ENCODE measurements at regions of chr13 and their contacts with region 1.

Region 1: GRCh38 chr13:113296842-113297369 is at the start of gene LAMP1:
- DNase-seq: peak; percentile 98
- H3K4me3 Mint-ChIP-seq: peak within 1 kb of the TSS; percentile 97
- H3K27ac Mint-ChIP-seq: peak within 1 kb of the TSS; percentile 97
- H3K4me1 Mint-ChIP-seq: peaks cover 29% of the 10 kb centered on the region
- H3K27me3 Mint-ChIP-seq: peaks cover 16% of the 10 kb centered on the region
- total RNA-seq, gene LAMP1: 57.7 and 58.4 TPM in 2 replicates

Region 2: GRCh38 chr13:112942689-112943308 is 354.1 kb before region 1 on chr13:
- intact Hi-C with region 1: loop called (anchors 1 kb)
- DNase-seq: peak; percentile 86
- H3K4me3 Mint-ChIP-seq: peak overlapping the region; percentile 86
- H3K27ac Mint-ChIP-seq: no peak overlapping the region
- H3K4me1 Mint-ChIP-seq: peaks cover 5% of the 10 kb centered on the region
- H3K27me3 Mint-ChIP-seq: peaks cover 35% of the 10 kb centered on the region

Region 3: GRCh38 chr13:113138792-113139551 is 157.9 kb before region 1 on chr13:
- intact Hi-C with region 1: no loop called
- DNase-seq: no peak
- H3K4me3 Mint-ChIP-seq: no peak overlapping the region
- H3K27ac Mint-ChIP-seq: no peak overlapping the region
- H3K4me1 Mint-ChIP-seq: no peaks in the 10 kb centered on the region
- H3K27me3 Mint-ChIP-seq: peaks cover 17% of the 10 kb centered on the region

Region 4: GRCh38 chr13:113208424-113209335 is 88.2 kb before region 1 on chr13 and contains the start of gene PCID2:
- intact Hi-C with region 1: loop called (anchors 2 kb)
- DNase-seq: peak; percentile 87
- H3K4me3 Mint-ChIP-seq: peak within 1 kb of the TSS; percentile 82
- H3K27ac Mint-ChIP-seq: peak within 1 kb of the TSS; percentile 53
- H3K4me1 Mint-ChIP-seq: peaks cover 45% of the 10 kb centered on the region
- H3K27me3 Mint-ChIP-seq: no peaks in the 10 kb centered on the region
- total RNA-seq, gene PCID2: 67.1 and 67.6 TPM in 2 replicates

Region 5: DNA sequence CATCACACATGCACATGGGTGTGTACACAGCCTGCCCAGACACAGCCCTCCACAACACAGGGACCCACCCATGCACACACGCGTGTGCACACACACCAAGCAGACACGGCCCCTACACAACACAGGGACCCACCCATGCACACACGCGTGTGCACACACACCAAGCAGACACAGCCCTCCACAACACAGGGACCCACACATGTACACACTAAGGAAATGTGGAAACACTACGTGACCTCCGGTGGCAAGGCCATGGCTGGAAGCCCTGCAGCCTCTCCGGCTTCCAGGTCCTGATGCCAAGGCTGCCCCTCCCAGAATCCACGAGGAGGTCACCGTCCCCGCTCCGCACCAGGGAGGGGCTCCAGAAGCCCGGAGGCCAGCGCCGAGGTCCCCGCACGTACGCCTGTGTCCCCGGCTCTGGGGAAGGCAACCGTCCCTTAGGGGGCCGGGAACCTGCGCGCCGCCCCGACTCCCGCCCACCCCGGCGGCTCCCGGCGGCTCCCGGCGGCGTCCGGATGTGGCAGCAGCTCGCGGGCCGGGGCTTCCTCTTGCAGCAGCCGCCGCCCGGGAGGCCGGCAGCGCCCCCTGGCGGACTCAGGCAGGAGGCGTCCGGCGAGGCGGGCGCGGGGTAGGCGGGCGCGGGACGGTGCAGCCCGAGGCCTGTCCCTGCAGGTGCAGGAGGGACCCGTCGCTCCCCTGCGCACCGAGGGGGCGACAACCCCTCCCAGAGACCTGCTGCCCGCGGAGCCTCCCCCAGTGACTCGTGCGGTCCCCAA is 96.8 kb after region 1 on chr13:
- intact Hi-C with region 1: loop called (anchors 2 kb)
- DNase-seq: peak; percentile 77
- H3K4me3 Mint-ChIP-seq: peak overlapping the region; percentile 84
- H3K27ac Mint-ChIP-seq: peak overlapping the region; percentile 67
- H3K4me1 Mint-ChIP-seq: peaks cover 4% of the 10 kb centered on the region
- H3K27me3 Mint-ChIP-seq: no peaks in the 10 kb centered on the region

Region 6: GRCh38 chr13:113490496-113491417 is 193.9 kb after region 1 on chr13 and contains the start of gene DCUN1D2:
- intact Hi-C with region 1: loop called (anchors 2 kb)
- DNase-seq: peak; percentile 78
- H3K4me3 Mint-ChIP-seq: peak within 1 kb of the TSS; percentile 93
- H3K27ac Mint-ChIP-seq: peak within 1 kb of the TSS; percentile 79
- H3K4me1 Mint-ChIP-seq: peaks cover 50% of the 10 kb centered on the region
- H3K27me3 Mint-ChIP-seq: no peaks in the 10 kb centered on the region
- total RNA-seq, gene DCUN1D2: 22.2 and 25.5 TPM in 2 replicates